ENCODE measurements at regions of chr2 and their contacts with region 1.

Region 1: DNA sequence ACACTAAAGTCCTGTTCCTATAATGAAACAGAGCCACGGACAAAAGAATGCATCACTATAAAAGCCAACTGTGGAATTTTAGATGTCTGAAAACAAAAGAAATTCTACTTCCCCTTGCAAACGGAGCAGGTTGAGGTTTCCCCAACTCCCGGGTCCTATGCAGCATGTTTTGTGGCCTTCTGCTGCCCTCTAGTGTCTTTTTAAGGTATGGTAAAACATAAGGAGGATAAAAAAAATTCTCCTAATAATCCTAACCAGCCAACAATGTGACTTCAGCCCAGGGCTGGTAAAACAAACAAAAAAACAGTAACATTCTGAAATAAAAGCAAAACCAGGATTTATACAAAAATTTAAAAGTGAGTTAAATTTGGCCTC is 539.5 kb downstream of the NRXN1 start:
- DNase-seq: peak; percentile 70
- H3K4me3 Mint-ChIP-seq: peak overlapping the region; percentile 41
- H3K27ac Mint-ChIP-seq: no peak overlapping the region
- H3K4me1 Mint-ChIP-seq: peaks cover 6% of the 10 kb centered on the region
- H3K27me3 Mint-ChIP-seq: peaks cover 38% of the 10 kb centered on the region
- CTCF ChIP-seq: peak; percentile 65

Region 2: GRCh38 chr2:48600204-48600813 is 1892.2 kb before region 1 on chr2:
- CTCF ChIA-PET with region 1: interaction called, 4 read pairs
- POLR2A ChIA-PET with region 1: no interaction called
- intact Hi-C with region 1: loop called (anchors 2 kb)
- DNase-seq: peak; percentile 57
- H3K4me3 Mint-ChIP-seq: no peak overlapping the region
- H3K27ac Mint-ChIP-seq: no peak overlapping the region
- H3K4me1 Mint-ChIP-seq: no peaks in the 10 kb centered on the region
- H3K27me3 Mint-ChIP-seq: no peaks in the 10 kb centered on the region
- CTCF ChIP-seq: peak; percentile 79

Region 3: DNA sequence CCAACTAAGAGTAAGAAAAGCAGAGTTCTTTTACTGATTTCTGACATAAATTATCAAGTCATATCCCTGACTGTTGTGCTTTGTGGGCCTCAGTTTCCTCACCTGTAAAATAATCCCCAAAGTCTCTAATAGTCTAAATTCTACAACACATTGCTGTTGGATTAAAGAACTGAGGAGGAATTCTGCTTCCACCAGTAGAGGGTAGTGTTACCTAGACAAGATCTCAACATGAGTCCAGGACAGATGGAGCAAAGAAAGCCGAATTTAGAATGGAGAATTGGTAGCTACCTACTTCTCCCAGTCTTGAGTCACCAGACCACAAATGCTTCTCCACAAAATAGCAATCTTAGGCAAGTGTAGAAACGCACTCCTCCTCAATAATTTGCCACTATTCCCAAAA is 875.7 kb before region 1 on chr2:
- CTCF ChIA-PET with region 1: interaction called, 4 read pairs
- POLR2A ChIA-PET with region 1: no interaction called
- intact Hi-C with region 1: loop called (anchors 2 kb)
- DNase-seq: peak; percentile 56
- H3K4me3 Mint-ChIP-seq: no peak overlapping the region
- H3K27ac Mint-ChIP-seq: no peak overlapping the region
- H3K4me1 Mint-ChIP-seq: no peaks in the 10 kb centered on the region
- H3K27me3 Mint-ChIP-seq: peaks cover 13% of the 10 kb centered on the region
- CTCF ChIP-seq: peak; percentile 49

Region 4: DNA sequence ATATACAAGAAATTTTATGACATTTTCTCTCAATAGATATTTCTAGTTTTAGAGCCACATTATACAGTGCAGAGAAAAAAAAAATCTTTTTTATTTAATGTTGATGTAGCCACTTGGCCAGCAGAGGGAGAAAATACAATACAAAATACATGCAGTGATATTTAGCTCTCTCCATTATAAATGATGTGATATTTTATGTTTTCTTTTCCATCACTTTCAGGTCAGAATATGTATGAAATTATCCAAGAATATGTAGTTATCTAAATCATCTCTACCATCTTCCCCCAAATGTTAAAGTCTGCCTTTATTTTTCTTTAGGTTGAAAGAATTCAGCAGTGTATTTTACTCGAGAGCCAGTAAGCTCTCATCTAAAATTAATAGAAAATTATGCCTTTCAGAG is 804.5 kb before region 1 on chr2:
- CTCF ChIA-PET with region 1: interaction called, 14 read pairs
- POLR2A ChIA-PET with region 1: interaction called, 3 read pairs
- intact Hi-C with region 1: loop called (anchors 5 kb)
- DNase-seq: no peak
- H3K4me3 Mint-ChIP-seq: no peak overlapping the region
- H3K27ac Mint-ChIP-seq: no peak overlapping the region
- H3K4me1 Mint-ChIP-seq: no peaks in the 10 kb centered on the region
- H3K27me3 Mint-ChIP-seq: peaks cover 22% of the 10 kb centered on the region
- CTCF ChIP-seq: peak; percentile 39

Region 5: GRCh38 chr2:49770919-49771318 is 721.5 kb before region 1 on chr2:
- CTCF ChIA-PET with region 1: interaction called, 6 read pairs
- POLR2A ChIA-PET with region 1: no interaction called
- intact Hi-C with region 1: loop called (anchors 5 kb)
- DNase-seq: peak; percentile 65
- H3K4me3 Mint-ChIP-seq: no peak overlapping the region
- H3K27ac Mint-ChIP-seq: no peak overlapping the region
- H3K4me1 Mint-ChIP-seq: no peaks in the 10 kb centered on the region
- H3K27me3 Mint-ChIP-seq: peaks cover 20% of the 10 kb centered on the region
- CTCF ChIP-seq: peak; percentile 55

Region 6: DNA sequence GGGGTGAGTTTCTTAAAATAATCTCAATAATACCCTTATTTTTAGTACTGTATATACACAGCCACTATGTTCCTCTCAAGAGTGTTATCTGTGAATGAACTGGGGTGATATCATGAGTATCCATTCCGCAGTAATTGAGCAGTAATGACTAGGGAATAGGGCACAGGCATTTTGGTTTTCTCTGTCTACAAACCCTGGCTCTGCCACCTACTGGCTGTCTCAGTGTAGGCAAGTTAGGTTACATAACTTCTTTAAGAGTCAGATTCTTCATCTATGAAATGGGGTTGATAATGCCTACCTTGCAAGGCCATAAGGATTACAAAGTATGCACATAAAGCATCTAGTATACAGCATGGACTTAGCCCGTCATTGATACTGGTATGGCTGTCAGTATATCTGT is 16.3 kb before region 1 on chr2:
- CTCF ChIA-PET with region 1: interaction called, 45 read pairs
- POLR2A ChIA-PET with region 1: no interaction called
- intact Hi-C with region 1: no loop called
- DNase-seq: peak; percentile 14
- H3K4me3 Mint-ChIP-seq: no peak overlapping the region
- H3K27ac Mint-ChIP-seq: no peak overlapping the region
- H3K4me1 Mint-ChIP-seq: no peaks in the 10 kb centered on the region
- H3K27me3 Mint-ChIP-seq: peaks cover 40% of the 10 kb centered on the region
- CTCF ChIP-seq: no peak

Region 7: GRCh38 chr2:50529600-50530218 is 37.2 kb after region 1 on chr2:
- CTCF ChIA-PET with region 1: interaction called, 10 read pairs
- POLR2A ChIA-PET with region 1: no interaction called
- intact Hi-C with region 1: no loop called
- DNase-seq: peak; percentile 68
- H3K4me3 Mint-ChIP-seq: no peak overlapping the region
- H3K27ac Mint-ChIP-seq: no peak overlapping the region
- H3K4me1 Mint-ChIP-seq: peaks cover 6% of the 10 kb centered on the region
- H3K27me3 Mint-ChIP-seq: no peaks in the 10 kb centered on the region
- CTCF ChIP-seq: peak; percentile 67

Region 8: GRCh38 chr2:51013079-51013932 is 520.8 kb after region 1 on chr2:
- CTCF ChIA-PET with region 1: no interaction called
- POLR2A ChIA-PET with region 1: no interaction called
- intact Hi-C with region 1: no loop called
- DNase-seq: peak; percentile 50
- H3K4me3 Mint-ChIP-seq: no peak overlapping the region
- H3K27ac Mint-ChIP-seq: no peak overlapping the region
- H3K4me1 Mint-ChIP-seq: no peaks in the 10 kb centered on the region
- H3K27me3 Mint-ChIP-seq: no peaks in the 10 kb centered on the region
- CTCF ChIP-seq: no peak